ENCODE measurements at regions of chr21 and their contacts with region 1.

Region 1: DNA sequence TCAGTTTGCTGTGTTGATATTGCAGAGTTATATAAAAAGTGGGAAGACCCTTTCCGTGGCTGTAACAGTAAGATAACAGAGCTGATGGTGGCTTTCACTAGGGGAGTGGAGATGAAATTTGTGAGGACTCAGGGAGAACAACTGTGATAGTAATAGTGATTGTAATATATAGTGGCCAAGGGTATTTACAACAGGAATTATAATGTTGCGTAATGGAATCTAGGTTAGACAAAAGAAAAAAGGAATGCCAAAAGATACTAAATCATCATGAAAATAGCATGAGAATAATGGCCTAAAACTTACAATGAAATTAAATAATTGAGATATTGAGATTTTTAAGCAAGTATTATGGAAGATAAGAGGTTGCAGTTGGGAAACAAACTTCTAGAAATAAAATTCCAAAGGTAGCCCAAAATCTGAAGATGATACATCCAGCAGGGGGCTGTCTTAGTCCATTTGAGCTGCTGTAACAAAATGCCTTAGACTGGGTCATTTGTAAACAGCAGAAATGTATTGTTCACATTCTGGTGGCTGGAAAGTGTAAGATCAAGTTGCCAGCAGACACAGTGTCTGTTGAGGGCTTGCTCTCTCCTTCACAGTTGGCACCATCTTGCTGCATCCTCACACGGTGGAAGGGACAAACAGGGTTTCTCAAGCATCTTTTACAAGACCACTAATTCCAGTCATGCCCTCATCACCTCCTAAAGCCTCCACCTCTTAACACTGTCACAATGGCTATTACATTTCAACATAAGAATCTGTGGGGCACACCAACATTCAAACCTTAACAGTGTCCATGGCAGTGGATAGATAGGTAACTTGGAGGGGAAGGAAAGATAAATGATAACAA is 711.2 kb downstream of the MRPL39 start:
- DNase-seq: no peak
- CTCF ChIP-seq: peak; percentile 61

Region 2: DNA sequence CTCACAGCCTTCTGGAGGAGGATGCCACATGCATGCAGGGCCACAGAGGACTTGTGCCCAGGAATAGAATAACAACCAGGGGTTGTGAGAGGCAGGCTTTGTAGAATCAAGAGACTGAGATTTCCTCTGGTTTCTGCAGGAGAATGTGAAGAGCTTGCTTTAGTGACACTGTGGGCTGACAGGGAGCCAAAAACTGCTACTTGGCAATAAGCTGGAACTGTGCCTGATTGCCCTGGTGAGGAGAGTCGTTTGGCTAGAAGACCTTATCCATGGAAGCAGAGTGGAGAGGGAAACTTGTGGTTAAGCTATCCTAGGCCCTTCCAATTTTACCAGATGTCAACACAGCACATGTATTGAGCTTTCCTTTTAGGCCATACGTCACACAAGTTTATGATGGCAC is 190.9 kb before region 1 on chr21:
- in situ Hi-C with region 1: no loop called
- DNase-seq: no peak
- CTCF ChIP-seq: no peak

Region 3: GRCh38 chr21:25039461-25040380 is 143.6 kb after region 1 on chr21:
- in situ Hi-C with region 1: loop called (anchors 10 kb)
- DNase-seq: peak; percentile 12
- CTCF ChIP-seq: peak; percentile 67

Region 4: GRCh38 chr21:25313829-25314228 is 417.7 kb after region 1 on chr21:
- in situ Hi-C with region 1: loop called (anchors 25 kb)
- DNase-seq: no peak
- CTCF ChIP-seq: peak; percentile 43

Measured in GM13977 (cell line).